ENCODE measurements at regions of chr7 and their contacts with region 1.

Region 1: GRCh38 chr7:128455551-128456254 is at the start of gene HILPDA:
- DNase-seq: peak; percentile 96 to 98 (median 98)
- ATAC-seq: peak; percentile 95 to 96
- H3K4me3 ChIP-seq: peak within 1 kb of the TSS; percentile 91
- H3K27ac ChIP-seq: peak within 1 kb of the TSS; percentile 99
- H3K4me1 ChIP-seq: peaks cover 10% of the 10 kb centered on the region
- H3K27me3 ChIP-seq: no peaks in the 10 kb centered on the region
- total RNA-seq, gene HILPDA: 6.2 to 10.6 (median 6.6) TPM

Region 2: DNA sequence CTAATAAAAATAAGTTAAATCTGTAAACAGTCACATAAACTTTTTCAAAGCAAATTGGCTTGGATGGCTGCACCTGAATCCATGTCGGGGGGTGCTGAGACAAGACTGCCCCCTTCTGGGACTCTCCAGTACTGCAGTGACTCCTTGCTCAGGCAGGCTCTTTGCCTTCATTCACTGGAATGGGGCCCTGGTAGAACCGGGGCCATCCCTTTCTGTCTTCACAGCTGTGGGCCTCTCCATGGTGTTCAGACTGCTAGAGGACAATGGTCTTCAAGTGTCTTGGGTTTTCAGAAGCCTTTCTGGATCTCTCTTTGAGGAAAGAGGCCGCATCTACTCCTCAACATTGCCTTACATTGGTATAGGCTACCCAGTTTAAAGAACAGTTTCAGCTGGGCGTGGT is 29.9 kb before region 1 on chr7:
- intact Hi-C with region 1: loop called (anchors 1 to 2 kb)
- DNase-seq: peak; percentile 61 to 86 (median 73)
- ATAC-seq: peak; percentile 18 to 63
- H3K4me3 ChIP-seq: no peak overlapping the region
- H3K27ac ChIP-seq: no peak overlapping the region
- H3K4me1 ChIP-seq: no peaks in the 10 kb centered on the region
- H3K27me3 ChIP-seq: no peaks in the 10 kb centered on the region

Region 3: GRCh38 chr7:128431754-128432153 is 23.9 kb before region 1 on chr7:
- intact Hi-C with region 1: loop called (anchors 1 to 2 kb)
- DNase-seq: no peak
- ATAC-seq: no peak
- H3K4me3 ChIP-seq: no peak overlapping the region
- H3K27ac ChIP-seq: no peak overlapping the region
- H3K4me1 ChIP-seq: no peaks in the 10 kb centered on the region
- H3K27me3 ChIP-seq: no peaks in the 10 kb centered on the region